AG04449 (cell line): ENCODE measurements at regions of chr4 and their contacts with region 1.

Region 1: DNA sequence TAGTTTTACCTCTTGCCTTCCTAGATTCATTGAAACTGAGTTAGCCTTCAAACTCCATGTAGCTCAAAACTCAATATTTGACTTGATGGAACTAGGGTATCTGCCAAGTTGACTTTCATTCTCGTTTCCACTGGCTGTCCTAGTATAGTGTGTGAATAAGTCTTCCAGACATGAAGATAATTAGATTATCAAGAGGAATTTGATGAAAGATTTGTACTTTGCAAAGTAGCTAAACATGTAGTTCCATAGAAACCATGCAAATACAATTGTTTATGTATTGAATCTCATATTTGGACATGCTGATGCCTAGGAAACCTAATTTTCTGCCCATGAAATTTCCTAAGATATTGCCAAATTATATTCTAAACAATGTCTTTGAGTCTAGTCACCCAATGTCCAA is 297.5 kb downstream of the ARHGAP24 start:
- DNase-seq: no peak
- H3K4me3 ChIP-seq: no peak overlapping the region
- CTCF ChIP-seq: no peak

Region 2: DNA sequence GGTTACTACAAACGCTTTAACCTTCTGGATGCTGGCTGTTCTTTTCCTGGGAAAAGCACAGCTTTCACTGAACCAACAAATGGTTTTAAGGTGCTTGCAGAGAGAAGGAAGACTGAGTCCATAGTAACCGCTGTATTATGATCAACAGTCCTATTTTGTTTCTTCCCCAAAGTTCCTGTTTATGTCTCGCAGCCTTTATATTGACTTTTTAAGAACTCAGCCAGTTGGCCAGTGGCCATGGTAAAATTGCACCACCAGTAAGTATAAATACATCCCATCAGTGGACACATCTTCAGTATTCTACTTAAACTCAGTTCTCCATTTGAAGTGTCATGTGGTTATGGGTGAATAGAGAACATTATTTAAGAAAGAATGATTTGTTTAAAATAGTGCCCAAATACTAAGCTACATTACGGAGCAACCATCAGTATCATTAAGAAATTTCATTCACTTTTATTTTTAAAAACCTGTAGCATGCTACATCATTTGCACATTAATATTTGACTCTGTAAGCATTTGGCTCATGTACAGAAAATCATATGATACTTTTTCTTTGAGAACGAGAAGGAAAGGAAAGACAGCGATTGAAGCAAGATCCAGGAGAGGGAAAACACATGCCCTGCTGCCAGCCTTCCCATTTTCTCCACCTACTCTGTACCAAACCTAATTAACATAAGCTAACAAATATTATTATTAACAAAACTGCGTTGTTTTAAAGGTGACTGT is 10.5 kb before region 1 on chr4:
- CTCF ChIA-PET with region 1: interaction called, 14 read pairs
- POLR2A ChIA-PET with region 1: interaction called, 3 read pairs
- DNase-seq: no peak
- H3K4me3 ChIP-seq: no peak overlapping the region
- CTCF ChIP-seq: no peak